H1 (cell line): ENCODE measurements at regions of chr6 and their contacts with region 1.

Region 1: DNA sequence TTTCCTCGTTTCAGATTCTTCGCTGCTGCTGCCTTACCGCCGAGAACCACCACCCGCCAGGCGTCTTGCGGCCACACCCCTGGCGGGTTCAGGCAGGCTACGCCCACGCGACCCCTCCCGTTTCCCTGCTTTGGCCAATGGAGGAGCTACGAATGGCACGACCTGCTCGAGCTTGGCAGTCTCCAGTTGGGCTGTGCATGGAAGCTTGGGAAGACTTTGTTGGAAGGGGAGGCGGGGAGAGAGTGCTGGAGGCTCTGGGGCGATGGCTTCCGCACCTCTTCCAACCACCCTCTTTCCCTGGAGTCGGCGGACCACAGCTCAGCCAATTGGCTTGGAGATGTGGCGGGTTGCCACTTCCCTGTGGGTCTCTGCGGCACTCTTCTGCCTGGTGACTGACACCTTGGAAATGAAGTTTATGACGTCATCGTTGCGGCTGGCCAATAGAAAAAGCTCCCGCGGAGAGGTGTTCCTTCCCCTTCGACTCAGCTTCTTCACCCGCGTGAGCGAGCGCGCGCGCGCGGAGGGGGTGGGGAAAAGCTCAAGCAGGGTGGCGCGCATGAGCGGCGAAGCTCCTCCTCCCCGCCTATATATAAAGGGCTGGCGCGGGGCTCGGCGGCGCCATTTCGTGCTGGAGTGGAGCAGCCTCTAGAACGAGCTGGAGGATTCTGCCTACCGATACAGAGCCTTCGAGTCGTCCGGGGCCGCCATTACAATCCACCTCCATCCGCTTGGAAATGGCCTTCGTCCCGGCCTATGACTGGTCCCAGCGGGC is 3.4 kb downstream of the BRD2 start:
- DNase-seq: peak; percentile 98 to 99
- H3K4me3 ChIP-seq: peak overlapping the region; percentile 90 to 99 (median 98)
- H3K27ac ChIP-seq: peak overlapping the region; percentile 99
- H3K4me1 ChIP-seq: peaks cover 0 to 14% (median 7%) of the 10 kb centered on the region in 4 experiments; a peak in 5 of 7 replicates
- H3K27me3 ChIP-seq: no peaks in the 10 kb centered on the region
- CTCF ChIP-seq: no peak; a peak in 1 of 4 replicates
- EP300 ChIP-seq: no peak; a peak in 1 of 3 replicates
- POLR2A ChIP-seq: peak in 1 of 2 experiments; percentile 99; a peak in 2 of 3 replicates
- RAD21 ChIP-seq: no peak

Region 2: GRCh38 chr6:32658268-32658897 is 313.4 kb before region 1 on chr6:
- CTCF ChIA-PET with region 1: no interaction called
- POLR2A ChIA-PET with region 1: no interaction called
- DNase-seq: no peak
- H3K4me3 ChIP-seq: no peak overlapping the region
- H3K27ac ChIP-seq: no peak overlapping the region
- H3K4me1 ChIP-seq: no peaks in the 10 kb centered on the region
- H3K27me3 ChIP-seq: no peaks in the 10 kb centered on the region
- CTCF ChIP-seq: no peak
- EP300 ChIP-seq: no peak
- POLR2A ChIP-seq: no peak
- RAD21 ChIP-seq: no peak

Region 3: DNA sequence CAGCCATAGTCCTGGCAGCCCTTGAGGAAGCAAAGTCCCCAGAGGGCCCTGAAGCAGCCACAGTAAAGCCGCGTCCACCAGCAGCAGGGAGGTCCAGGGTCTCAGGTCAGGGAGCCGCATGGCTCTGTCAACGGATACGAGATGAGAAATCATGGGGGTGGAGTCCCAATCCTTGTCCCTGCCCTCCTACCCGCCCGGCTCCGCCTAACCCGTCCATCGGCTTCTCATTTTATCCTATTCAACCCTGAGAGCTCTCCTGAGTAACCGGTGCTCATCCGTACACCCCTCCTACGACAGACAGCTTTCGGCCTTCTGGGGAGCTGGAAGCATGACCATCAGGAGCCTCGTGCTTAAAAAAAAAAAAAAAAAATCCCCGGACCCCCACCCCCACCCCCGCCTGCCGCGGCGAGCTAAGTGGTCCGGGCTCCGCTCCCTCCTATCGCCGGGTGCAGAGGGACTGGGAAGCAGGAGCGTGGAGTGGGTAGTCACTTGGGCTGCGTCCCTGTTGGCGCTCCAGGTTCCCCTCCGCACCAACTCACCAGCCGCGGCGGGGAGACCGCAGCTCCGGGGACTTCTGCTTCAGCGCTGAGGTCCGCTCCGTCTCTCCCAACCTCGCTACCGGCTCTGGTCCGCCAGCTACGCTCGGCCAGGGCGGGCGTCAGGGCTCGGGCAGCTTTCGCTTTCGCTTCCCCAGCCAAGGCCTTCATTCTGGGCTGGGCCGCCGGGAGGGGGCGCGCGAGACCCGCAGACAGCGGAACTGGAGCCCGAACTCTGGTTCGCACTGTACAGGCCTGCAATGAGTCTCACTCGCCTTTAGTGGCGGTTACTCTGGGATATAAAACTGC is 133.4 kb before region 1 on chr6 and contains the start of gene TAP2:
- CTCF ChIA-PET with region 1: interaction called, 14 read pairs
- POLR2A ChIA-PET with region 1: interaction called, 26 read pairs
- DNase-seq: peak in 1 of 2 experiments; percentile 99
- H3K4me3 ChIP-seq: peak within 1 kb of the TSS; percentile 53 to 81 (median 68)
- H3K27ac ChIP-seq: no peak within 1 kb of the TSS
- H3K4me1 ChIP-seq: peaks cover 0 to 7% (median 4%) of the 10 kb centered on the region in 4 experiments; a peak in 5 of 7 replicates
- H3K27me3 ChIP-seq: peaks cover 0 to 7% (median 6%) of the 10 kb centered on the region in 4 experiments; a peak in 4 of 7 replicates
- CTCF ChIP-seq: peak; percentile 70 to 97 (median 95)
- EP300 ChIP-seq: no peak
- POLR2A ChIP-seq: peak in 1 of 2 experiments; percentile 62; a peak in 1 of 3 replicates
- RAD21 ChIP-seq: peak; percentile 92 to 94
- total RNA-seq, gene TAP2: 24.3 and 27.2 TPM in 2 replicates

Region 4: DNA sequence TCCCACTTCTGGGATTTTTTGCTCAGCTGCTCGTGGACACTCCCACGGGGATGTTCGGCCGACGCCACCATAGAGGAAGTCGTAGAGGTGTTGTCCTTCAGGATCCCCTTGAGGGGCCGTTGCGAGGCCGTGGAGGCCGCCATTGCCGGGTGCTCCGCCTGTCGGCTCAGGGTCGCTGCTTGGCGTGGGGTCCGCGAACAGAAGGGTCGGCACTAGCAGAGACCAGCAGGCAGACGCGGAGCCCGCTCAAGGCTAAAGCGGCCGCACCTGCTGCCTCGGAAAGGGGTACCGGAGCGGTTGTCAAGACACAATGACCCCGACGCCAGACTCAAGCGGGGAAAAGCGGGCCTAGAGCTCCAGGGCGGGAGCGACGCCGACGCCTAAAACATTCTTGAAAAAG is 92.1 kb before region 1 on chr6:
- CTCF ChIA-PET with region 1: no interaction called
- POLR2A ChIA-PET with region 1: interaction called, 10 read pairs
- DNase-seq: no peak
- H3K4me3 ChIP-seq: no peak overlapping the region
- H3K27ac ChIP-seq: no peak overlapping the region
- H3K4me1 ChIP-seq: no peaks in the 10 kb centered on the region
- H3K27me3 ChIP-seq: no peaks in the 10 kb centered on the region
- CTCF ChIP-seq: no peak
- EP300 ChIP-seq: no peak
- POLR2A ChIP-seq: no peak
- RAD21 ChIP-seq: no peak

Region 5: GRCh38 chr6:32940656-32941213 is 31.0 kb before region 1 on chr6 and contains the start of gene HLA-DMB:
- CTCF ChIA-PET with region 1: no interaction called
- POLR2A ChIA-PET with region 1: interaction called, 45 read pairs
- DNase-seq: peak in 1 of 2 experiments; percentile 62
- H3K4me3 ChIP-seq: peak within 1 kb of the TSS; percentile 6 to 49 (median 26); a peak in 6 of 8 replicates
- H3K27ac ChIP-seq: no peak within 1 kb of the TSS
- H3K4me1 ChIP-seq: peaks cover 0 to 6% (median 1%) of the 10 kb centered on the region in 4 experiments; a peak in 4 of 7 replicates
- H3K27me3 ChIP-seq: no peaks in the 10 kb centered on the region
- CTCF ChIP-seq: no peak
- EP300 ChIP-seq: no peak
- POLR2A ChIP-seq: no peak
- RAD21 ChIP-seq: no peak
- total RNA-seq, gene HLA-DMB: 1.3 and 2.7 TPM in 2 replicates

Region 6: DNA sequence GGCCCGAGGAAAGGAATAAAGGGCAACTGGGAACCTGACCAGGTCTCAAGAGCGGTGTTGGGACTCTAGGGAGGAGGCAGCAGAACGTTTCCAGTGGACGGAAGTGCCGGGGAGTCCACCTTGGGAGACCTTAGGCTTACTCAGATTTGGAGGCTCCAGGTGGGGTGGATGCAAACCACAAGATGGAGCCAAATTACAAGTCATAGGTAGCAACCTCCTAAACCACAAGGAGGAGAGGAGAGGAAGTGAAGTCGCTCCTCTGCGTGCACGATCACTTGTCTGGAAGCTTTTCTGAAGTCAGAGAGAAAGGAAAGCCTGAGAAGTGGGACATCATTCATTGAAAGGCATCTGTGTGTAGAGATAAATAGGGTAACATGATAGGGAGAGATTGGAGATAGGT is 28.3 kb after region 1 on chr6:
- CTCF ChIA-PET with region 1: interaction called, 3 read pairs
- POLR2A ChIA-PET with region 1: interaction called, 13 read pairs
- DNase-seq: peak in 1 of 2 experiments; percentile 41
- H3K4me3 ChIP-seq: no peak overlapping the region
- H3K27ac ChIP-seq: no peak overlapping the region
- H3K4me1 ChIP-seq: no peaks in the 10 kb centered on the region
- H3K27me3 ChIP-seq: peaks cover 0 to 2% (median 0%) of the 10 kb centered on the region in 4 experiments; a peak in 2 of 7 replicates
- CTCF ChIP-seq: peak; percentile 46 to 93 (median 91)
- EP300 ChIP-seq: no peak
- POLR2A ChIP-seq: no peak
- RAD21 ChIP-seq: peak; percentile 96 to 97

Region 7: GRCh38 chr6:33151050-33151449 is 179.3 kb after region 1 on chr6:
- CTCF ChIA-PET with region 1: no interaction called
- POLR2A ChIA-PET with region 1: no interaction called
- DNase-seq: no peak
- H3K4me3 ChIP-seq: no peak overlapping the region
- H3K27ac ChIP-seq: no peak overlapping the region
- H3K4me1 ChIP-seq: peaks cover 0 to 2% (median 0%) of the 10 kb centered on the region in 4 experiments; a peak in 1 of 7 replicates
- H3K27me3 ChIP-seq: no peaks in the 10 kb centered on the region
- CTCF ChIP-seq: no peak
- EP300 ChIP-seq: no peak
- POLR2A ChIP-seq: no peak
- RAD21 ChIP-seq: no peak

Region 8: DNA sequence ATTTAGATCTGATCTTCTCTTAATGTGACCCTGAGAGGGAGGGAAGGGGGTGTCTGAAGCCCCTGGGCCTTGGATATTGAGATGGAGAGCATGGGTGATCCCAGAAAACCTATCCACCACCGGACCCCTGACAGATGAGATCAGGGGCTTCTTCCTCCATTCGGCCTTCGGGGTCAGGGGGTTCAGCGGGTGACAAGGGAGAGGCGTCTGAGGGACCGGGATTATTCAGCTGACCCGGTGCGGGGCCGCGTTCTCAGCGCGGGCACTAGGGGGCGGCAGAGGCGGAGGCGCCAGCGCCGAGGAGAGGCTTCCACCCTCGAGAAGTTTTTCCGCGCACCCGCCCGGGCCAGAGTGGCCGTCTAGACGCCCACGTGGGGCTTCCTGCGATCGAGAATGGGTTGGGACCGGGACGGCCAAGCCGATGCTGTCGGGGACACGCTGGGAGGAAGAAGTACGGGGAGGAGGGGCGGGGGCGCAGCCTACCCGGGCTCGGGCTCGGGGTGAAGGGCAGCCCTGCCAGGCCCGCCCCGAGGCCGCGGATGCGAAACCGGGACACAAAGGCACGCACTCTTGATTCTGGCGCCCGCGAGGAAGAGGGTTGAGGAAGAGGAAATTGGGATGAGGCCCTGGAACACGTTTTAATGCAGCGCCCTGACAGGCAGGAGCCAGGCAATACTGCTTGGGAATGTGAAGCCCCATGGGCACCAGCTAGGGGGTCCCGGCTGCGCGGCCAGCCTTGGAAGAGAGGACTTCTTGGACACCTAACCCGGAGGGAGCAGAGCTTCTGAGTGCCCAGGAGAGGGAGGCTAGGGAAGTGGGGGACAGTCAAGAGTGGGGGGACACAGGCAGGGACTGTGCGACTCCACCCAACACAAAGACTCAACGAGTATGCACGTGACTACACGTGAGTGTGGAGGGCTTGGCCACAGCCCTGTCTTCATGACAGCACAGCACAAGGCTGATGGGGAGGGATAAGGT is 189.9 kb after region 1 on chr6:
- CTCF ChIA-PET with region 1: no interaction called
- POLR2A ChIA-PET with region 1: interaction called, 22 read pairs
- DNase-seq: peak in 1 of 2 experiments; percentile 97
- H3K4me3 ChIP-seq: peak overlapping the region; percentile 42 to 74 (median 62)
- H3K27ac ChIP-seq: no peak overlapping the region
- H3K4me1 ChIP-seq: peaks cover 0 to 6% (median 2%) of the 10 kb centered on the region in 4 experiments; a peak in 6 of 7 replicates
- H3K27me3 ChIP-seq: peaks cover 0 to 8% (median 2%) of the 10 kb centered on the region in 4 experiments; a peak in 4 of 7 replicates
- CTCF ChIP-seq: peak in 2 of 3 experiments; percentile 82 to 88; a peak in 3 of 4 replicates
- EP300 ChIP-seq: no peak
- POLR2A ChIP-seq: no peak
- RAD21 ChIP-seq: peak; percentile 48 to 63; a peak in 3 of 4 replicates